Breast epithelium (tissue), 4 donors: ENCODE measurements at regions of chr3 and their contacts with region 1.

Region 1: GRCh38 chr3:139074565-139075115 is 29.9 kb upstream of the PRR23C start:
- DNase-seq: no peak
- H3K4me3 ChIP-seq: no peak overlapping the region
- H3K27ac ChIP-seq: no peak overlapping the region
- H3K4me1 ChIP-seq: no peaks in the 10 kb centered on the region
- H3K27me3 ChIP-seq: no peaks in the 10 kb centered on the region
- CTCF ChIP-seq: no peak
- POLR2A ChIP-seq: no peak

Region 2: GRCh38 chr3:139044366-139045210 is 30.1 kb before region 1 on chr3 and contains the start of gene PRR23C:
- intact Hi-C with region 1: loop called (anchors 2 kb)
- DNase-seq: no peak
- H3K4me3 ChIP-seq: no peak within 1 kb of the TSS
- H3K27ac ChIP-seq: no peak within 1 kb of the TSS
- H3K4me1 ChIP-seq: no peaks in the 10 kb centered on the region
- H3K27me3 ChIP-seq: no peaks in the 10 kb centered on the region
- CTCF ChIP-seq: no peak
- POLR2A ChIP-seq: no peak
- total RNA-seq, gene PRR23C: not detected